AG04450 (cell line): ENCODE measurements at regions of chr4 and their contacts with region 1.

Region 1: GRCh38 chr4:83639849-83640493 is 104.1 kb downstream of the GPAT3 start:
- DNase-seq: peak; percentile 61
- H3K4me3 ChIP-seq: no peak overlapping the region
- H3K27ac ChIP-seq: no peak overlapping the region
- H3K27me3 ChIP-seq: peaks cover 4% of the 10 kb centered on the region
- CTCF ChIP-seq: peak; percentile 87

Region 2: DNA sequence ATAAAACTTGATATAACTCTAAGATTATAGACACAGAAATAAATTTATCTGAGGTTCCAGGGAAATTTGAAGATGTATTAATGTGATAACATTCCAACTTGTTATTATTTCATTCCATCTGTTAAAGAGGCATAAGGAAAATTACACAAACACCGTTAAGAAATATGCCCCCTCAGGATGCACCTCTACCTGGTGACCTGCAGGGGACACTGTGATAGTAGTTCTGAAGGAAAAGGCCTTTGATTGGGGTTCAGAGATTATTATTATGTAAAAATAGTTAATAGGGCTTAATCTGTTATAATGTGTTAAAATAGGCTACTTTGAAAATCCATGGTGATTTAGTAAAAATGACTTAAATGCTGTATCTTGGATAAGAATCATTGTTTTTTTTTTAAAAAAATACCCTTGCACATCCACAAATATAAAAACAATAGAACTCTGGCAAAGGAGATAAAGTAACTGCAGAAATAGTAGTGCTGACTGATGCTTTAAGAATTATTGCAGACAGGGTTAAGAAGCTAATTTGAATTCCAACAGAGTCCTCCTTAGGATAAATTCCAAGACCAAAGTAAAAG is 149.0 kb before region 1 on chr4:
- CTCF ChIA-PET with region 1: interaction called, 55 read pairs
- POLR2A ChIA-PET with region 1: no interaction called
- DNase-seq: no peak
- H3K4me3 ChIP-seq: no peak overlapping the region
- H3K27ac ChIP-seq: no peak overlapping the region
- H3K27me3 ChIP-seq: no peaks in the 10 kb centered on the region
- CTCF ChIP-seq: peak; percentile 89

Region 3: GRCh38 chr4:83658806-83659495 is 19.0 kb after region 1 on chr4:
- CTCF ChIA-PET with region 1: interaction called, 26 read pairs
- POLR2A ChIA-PET with region 1: no interaction called
- DNase-seq: no peak
- H3K4me3 ChIP-seq: no peak overlapping the region
- H3K27ac ChIP-seq: no peak overlapping the region
- H3K27me3 ChIP-seq: peaks cover 3% of the 10 kb centered on the region
- CTCF ChIP-seq: no peak

Region 4: DNA sequence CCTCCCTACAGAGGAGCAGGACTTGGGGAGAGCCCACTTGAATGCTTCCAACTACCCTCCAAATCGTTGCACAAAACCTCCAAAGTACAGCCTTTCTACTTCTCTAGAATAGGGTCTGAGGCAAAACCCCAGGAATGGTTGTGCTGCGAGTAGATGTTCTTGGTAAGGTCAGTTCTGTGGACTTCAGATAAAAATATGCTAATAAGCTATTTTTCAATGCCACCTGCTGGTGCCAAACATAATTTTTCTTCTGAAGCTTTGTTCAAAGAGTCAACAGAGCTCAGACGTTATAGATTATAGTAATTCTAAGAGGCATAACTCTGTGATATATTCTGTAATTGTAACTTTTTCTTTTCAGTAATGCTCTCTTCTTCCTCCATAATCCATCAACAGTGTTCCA is 321.6 kb after region 1 on chr4:
- CTCF ChIA-PET with region 1: interaction called, 27 read pairs
- POLR2A ChIA-PET with region 1: no interaction called
- DNase-seq: no peak
- H3K4me3 ChIP-seq: no peak overlapping the region
- H3K27ac ChIP-seq: no peak overlapping the region
- H3K27me3 ChIP-seq: peaks cover 2% of the 10 kb centered on the region
- CTCF ChIP-seq: peak; percentile 36

Region 5: DNA sequence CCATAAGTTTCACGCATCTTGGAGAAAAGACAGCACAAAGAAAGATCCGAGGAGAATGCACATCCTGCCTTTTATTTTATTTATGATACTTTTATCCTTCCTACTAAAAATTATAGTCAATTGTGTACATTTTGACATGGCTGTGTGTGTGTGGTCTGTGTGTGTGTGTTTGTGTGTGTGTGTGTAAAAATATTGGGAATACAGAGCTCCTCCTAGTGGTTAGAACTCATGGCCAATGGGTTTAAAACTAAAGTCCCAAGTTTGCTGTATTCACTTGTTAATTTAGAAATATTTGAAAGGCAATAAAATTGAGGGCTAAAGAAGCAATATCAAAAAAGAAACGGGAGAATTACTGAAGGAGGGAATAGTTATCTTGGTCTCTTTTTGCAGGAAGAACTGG is 811.6 kb after region 1 on chr4:
- CTCF ChIA-PET with region 1: interaction called, 18 read pairs
- POLR2A ChIA-PET with region 1: no interaction called
- DNase-seq: no peak
- H3K4me3 ChIP-seq: no peak overlapping the region
- H3K27ac ChIP-seq: no peak overlapping the region
- H3K27me3 ChIP-seq: no peaks in the 10 kb centered on the region
- CTCF ChIP-seq: peak; percentile 50

Region 6: DNA sequence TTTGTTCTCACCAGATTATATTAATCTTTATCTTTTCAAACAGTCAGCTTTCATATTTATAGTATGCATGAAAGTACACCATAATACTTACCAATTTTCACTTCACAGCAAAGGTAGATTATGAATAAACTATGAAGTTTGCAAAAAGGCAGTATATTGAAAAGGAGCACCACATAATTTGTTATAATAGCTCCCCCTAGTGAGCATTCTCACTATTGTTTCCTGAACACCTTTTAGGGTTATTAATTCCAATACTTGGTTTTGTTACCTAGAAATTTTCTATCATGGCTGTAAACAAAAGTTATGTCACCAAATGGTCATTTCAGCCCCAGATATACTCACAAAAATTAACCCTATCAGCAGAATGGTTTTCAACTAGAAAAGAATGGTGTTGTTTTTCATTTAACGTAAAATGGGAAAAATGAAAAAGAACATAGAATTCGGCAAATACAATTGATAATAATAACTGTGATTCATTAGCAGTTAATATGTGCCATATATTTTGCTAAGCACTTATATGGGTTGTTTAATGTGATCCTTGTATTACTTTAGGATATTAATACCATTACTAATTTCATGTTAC is 889.3 kb after region 1 on chr4:
- CTCF ChIA-PET with region 1: interaction called, 14 read pairs
- POLR2A ChIA-PET with region 1: no interaction called
- DNase-seq: no peak
- H3K4me3 ChIP-seq: no peak overlapping the region
- H3K27ac ChIP-seq: no peak overlapping the region
- H3K27me3 ChIP-seq: no peaks in the 10 kb centered on the region
- CTCF ChIP-seq: peak; percentile 70